ENCODE measurements at regions of chr1 and their contacts with region 1.

Region 1: GRCh38 chr1:119139857-119140176 is 636 bp downstream of the WARS2 start:
- DNase-seq: no peak

Region 2: GRCh38 chr1:119080586-119080985 is 59.2 kb before region 1 on chr1:
- intact Hi-C with region 1: loop called in 1 of 2 experiments (anchors 10 kb)
- DNase-seq: no peak

Measured in posterior vena cava (tissue), 2 donors.